Natural killer cell (primary cell): ENCODE measurements at regions of chr9 and their contacts with region 1.

Region 1: GRCh38 chr9:38432922-38433510 is 8.8 kb upstream of the IGFBPL1 start:
- DNase-seq: peak in 1 of 2 donors; percentile 61
- ATAC-seq: peak in 1 of 3 donors; percentile 34
- H3K4me3 ChIP-seq: no peak overlapping the region
- H3K4me3 Mint-ChIP-seq: no peak overlapping the region
- H3K27ac ChIP-seq: no peak overlapping the region
- H3K27ac Mint-ChIP-seq: no peak overlapping the region
- H3K4me1 ChIP-seq: no peaks in the 10 kb centered on the region
- H3K4me1 Mint-ChIP-seq: peaks cover 0 to 6% of the 10 kb centered on the region in 2 donors
- H3K27me3 ChIP-seq: no peaks in the 10 kb centered on the region
- H3K27me3 Mint-ChIP-seq: peaks cover 8 to 18% of the 10 kb centered on the region in 2 donors
- CTCF ChIP-seq: peak; percentile 71

Region 2: DNA sequence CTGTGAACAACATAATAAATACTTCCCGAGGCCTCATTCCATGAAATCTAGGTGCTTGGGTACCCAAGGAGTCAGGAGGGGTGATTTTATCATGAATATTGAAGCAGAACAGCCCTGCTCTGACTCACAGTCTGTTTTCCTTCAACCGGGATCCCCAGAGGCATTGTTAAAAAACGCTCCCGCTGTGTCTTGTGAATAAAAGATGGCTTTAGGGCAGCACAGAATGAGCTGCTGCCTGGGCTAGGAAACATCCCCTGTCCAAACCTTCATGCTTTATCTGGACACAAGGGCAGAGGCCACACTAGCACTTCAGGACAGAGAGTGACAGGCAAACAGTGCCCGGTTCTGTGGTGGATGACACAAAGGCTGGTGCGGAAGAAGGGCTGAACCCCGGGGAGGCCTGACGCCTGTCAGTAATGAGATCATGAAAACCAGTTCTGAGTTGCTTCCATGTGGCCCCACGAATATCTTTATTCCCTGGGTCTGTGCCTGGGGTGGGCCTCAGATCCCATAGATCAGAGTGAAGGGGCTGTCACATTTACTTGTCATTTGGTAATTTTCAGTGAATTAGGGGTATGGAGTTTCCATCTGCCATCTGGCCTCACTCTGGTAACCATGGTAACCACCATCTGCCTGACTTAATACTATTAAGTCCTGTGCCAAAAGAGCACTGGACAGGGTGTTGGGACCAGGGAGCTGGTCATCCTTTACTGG is 11.4 kb before region 1 on chr9:
- intact Hi-C with region 1: loop called (anchors 1 kb)
- DNase-seq: no peak
- ATAC-seq: no peak
- H3K4me3 ChIP-seq: no peak overlapping the region
- H3K4me3 Mint-ChIP-seq: no peak overlapping the region
- H3K27ac ChIP-seq: no peak overlapping the region
- H3K27ac Mint-ChIP-seq: no peak overlapping the region
- H3K4me1 ChIP-seq: no peaks in the 10 kb centered on the region
- H3K4me1 Mint-ChIP-seq: peaks cover 0 to 5% of the 10 kb centered on the region in 2 donors
- H3K27me3 ChIP-seq: peaks cover 20% of the 10 kb centered on the region
- H3K27me3 Mint-ChIP-seq: peaks cover 35 to 51% of the 10 kb centered on the region in 2 donors
- CTCF ChIP-seq: no peak

Region 3: DNA sequence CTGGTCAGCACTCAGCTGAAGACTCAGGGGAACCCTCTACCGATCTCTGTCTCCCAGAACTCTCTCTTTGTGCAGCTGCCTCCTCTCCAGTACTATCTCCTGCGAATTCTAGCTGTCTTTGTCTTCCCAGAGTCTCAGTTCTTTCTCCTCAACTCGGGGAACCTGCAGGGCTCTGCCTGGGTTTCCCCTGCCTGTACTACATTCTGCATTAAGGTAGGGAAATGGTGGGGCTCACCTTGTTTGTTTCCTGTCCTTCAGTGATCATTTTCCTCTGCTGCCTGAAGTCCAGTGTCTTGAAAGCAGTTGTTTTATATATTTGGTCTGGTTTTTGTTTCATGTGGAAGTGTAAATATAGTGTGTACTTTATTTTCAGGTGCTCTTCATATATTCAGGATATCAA is 34.4 kb after region 1 on chr9:
- intact Hi-C with region 1: no loop called
- DNase-seq: no peak
- ATAC-seq: no peak
- H3K4me3 ChIP-seq: no peak overlapping the region
- H3K4me3 Mint-ChIP-seq: no peak overlapping the region
- H3K27ac ChIP-seq: no peak overlapping the region
- H3K27ac Mint-ChIP-seq: no peak overlapping the region
- H3K4me1 ChIP-seq: no peaks in the 10 kb centered on the region
- H3K4me1 Mint-ChIP-seq: no peaks in the 10 kb centered on the region
- H3K27me3 ChIP-seq: no peaks in the 10 kb centered on the region
- H3K27me3 Mint-ChIP-seq: peaks cover 13 to 18% of the 10 kb centered on the region in 2 donors
- CTCF ChIP-seq: no peak